ENCODE measurements at regions of chr7 and their contacts with region 1.

Region 1: DNA sequence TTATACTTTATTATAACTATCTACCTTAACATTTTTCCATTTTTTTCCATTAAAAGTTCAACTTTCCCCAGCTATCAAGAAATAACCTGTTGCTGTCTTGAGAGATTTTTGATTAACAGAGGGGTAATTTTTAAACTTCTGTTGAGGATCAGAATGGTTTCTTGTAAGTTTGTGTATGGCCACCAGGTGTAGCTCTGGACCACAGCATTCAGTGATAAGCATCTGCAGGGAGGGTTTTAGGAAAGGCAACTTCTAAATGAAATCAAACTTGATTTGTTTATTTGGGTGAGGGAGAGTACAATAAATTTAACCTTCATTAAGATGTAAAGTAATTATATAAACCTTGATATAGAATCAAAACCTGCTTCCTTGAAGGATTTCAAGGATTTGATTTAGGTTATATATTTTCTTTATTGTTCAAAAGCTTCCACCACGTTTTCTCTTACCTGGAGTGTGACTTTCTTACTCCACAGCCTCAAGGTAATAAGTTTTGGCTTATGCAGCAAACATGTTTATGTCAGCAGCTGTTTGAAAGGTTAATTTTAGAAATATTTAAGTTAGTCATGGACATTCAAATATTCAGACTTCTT is 153.3 kb downstream of the STK31 start:
- DNase-seq: peak; percentile 60
- H3K4me3 Mint-ChIP-seq: no peak overlapping the region
- H3K27ac Mint-ChIP-seq: no peak overlapping the region
- H3K4me1 Mint-ChIP-seq: no peaks in the 10 kb centered on the region
- H3K27me3 Mint-ChIP-seq: peaks cover 16% of the 10 kb centered on the region

Region 2: GRCh38 chr7:23783115-23783514 is 80.2 kb before region 1 on chr7:
- intact Hi-C with region 1: no loop called
- DNase-seq: no peak
- H3K4me3 Mint-ChIP-seq: no peak overlapping the region
- H3K27ac Mint-ChIP-seq: no peak overlapping the region
- H3K4me1 Mint-ChIP-seq: no peaks in the 10 kb centered on the region
- H3K27me3 Mint-ChIP-seq: no peaks in the 10 kb centered on the region

Region 3: DNA sequence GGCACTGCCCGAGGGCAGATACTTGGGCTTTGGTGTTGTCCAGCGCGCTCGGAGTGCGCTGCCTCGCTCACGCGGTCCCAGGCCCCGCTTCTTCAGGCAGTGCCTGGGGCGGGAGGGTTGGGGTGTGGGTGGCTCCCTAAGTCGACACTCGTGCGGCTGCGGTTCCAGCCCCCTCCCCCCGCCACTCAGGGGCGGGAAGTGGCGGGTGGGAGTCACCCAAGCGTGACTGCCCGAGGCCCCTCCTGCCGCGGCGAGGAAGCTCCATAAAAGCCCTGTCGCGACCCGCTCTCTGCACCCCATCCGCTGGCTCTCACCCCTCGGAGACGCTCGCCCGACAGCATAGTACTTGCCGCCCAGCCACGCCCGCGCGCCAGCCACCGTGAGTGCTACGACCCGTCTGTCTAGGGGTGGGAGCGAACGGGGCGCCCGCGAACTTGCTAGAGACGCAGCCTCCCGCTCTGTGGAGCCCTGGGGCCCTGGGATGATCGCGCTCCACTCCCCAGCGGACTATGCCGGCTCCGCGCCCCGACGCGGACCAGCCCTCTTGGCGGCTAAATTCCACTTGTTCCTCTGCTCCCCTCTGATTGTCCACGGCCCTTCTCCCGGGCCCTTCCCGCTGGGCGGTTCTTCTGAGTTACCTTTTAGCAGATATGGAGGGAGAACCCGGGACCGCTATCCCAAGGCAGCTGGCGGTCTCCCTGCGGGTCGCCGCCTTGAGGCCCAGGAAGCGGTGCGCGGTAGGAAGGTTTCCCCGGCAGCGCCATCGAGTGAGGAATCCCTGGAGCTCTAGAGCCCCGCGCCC is 420.8 kb after region 1 on chr7 and contains the start of gene NPY:
- intact Hi-C with region 1: loop called (anchors 10 kb)
- DNase-seq: no peak
- H3K4me3 Mint-ChIP-seq: peak within 1 kb of the TSS; percentile 73
- H3K27ac Mint-ChIP-seq: no peak within 1 kb of the TSS
- H3K4me1 Mint-ChIP-seq: peaks cover 3% of the 10 kb centered on the region
- H3K27me3 Mint-ChIP-seq: peaks cover 59% of the 10 kb centered on the region
- total RNA-seq, gene NPY: not detected in 2 replicates

Region 4: GRCh38 chr7:24381894-24382505 is 518.7 kb after region 1 on chr7:
- intact Hi-C with region 1: loop called (anchors 5 kb)
- DNase-seq: no peak
- H3K4me3 Mint-ChIP-seq: no peak overlapping the region
- H3K27ac Mint-ChIP-seq: no peak overlapping the region
- H3K4me1 Mint-ChIP-seq: no peaks in the 10 kb centered on the region
- H3K27me3 Mint-ChIP-seq: peaks cover 7% of the 10 kb centered on the region

Measured in activated CD4-positive, alpha-beta T cell treated with anti-CD3 and anti-CD28 coated beads, Interleukin-2, amount 10 ng/mL, durations not matched to agents 24 days and 14 days (primary cell).